H1 (cell line): ENCODE measurements at regions of chr11 and their contacts with region 1.

Region 1: GRCh38 chr11:24779791-24780190 is 282.9 kb downstream of the LUZP2 start:
- DNase-seq: no peak
- H3K4me3 ChIP-seq: no peak overlapping the region
- H3K27ac ChIP-seq: no peak overlapping the region
- H3K4me1 ChIP-seq: peaks cover 0 to 6% (median 3%) of the 10 kb centered on the region in 4 experiments; a peak in 2 of 7 replicates
- H3K27me3 ChIP-seq: no peaks in the 10 kb centered on the region
- CTCF ChIP-seq: peak; percentile 25 to 59 (median 42)
- EP300 ChIP-seq: no peak
- POLR2A ChIP-seq: no peak
- RAD21 ChIP-seq: peak; percentile 67

Region 2: DNA sequence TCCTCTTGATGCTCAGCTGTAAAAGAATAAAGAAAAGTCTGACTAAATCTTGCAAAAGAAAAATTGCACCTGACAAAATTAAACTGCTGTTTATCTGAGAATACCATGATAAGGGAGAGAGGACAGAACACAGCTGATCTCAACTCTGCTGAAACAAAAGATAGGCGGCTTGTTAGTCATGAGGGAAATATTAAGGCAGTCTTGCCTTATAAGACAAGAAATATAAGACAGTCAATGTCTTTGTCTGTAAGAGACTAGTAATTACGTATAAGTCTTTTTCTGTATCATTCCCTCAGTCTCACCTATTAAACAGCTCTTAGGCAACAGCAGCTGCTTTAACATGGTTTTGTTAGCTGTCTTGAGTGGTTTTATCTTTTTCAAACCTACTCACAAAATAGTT is 13.7 kb after region 1 on chr11:
- CTCF ChIA-PET with region 1: interaction called, 11 read pairs
- POLR2A ChIA-PET with region 1: no interaction called
- DNase-seq: no peak
- H3K4me3 ChIP-seq: no peak overlapping the region
- H3K27ac ChIP-seq: no peak overlapping the region
- H3K4me1 ChIP-seq: no peaks in the 10 kb centered on the region
- H3K27me3 ChIP-seq: no peaks in the 10 kb centered on the region
- CTCF ChIP-seq: no peak
- EP300 ChIP-seq: no peak
- POLR2A ChIP-seq: no peak
- RAD21 ChIP-seq: no peak